ENCODE measurements at regions of chr7 and their contacts with region 1.

Region 1: GRCh38 chr7:128739048-128739962 is at the start of gene CALU:
- DNase-seq: peak; percentile 99
- ATAC-seq: peak; percentile 99
- H3K4me3 ChIP-seq: peak within 1 kb of the TSS; percentile 70 to 94
- H3K27ac ChIP-seq: peak within 1 kb of the TSS; percentile 59 to 91
- H3K4me1 ChIP-seq: peaks cover 0 to 3% of the 10 kb centered on the region in 2 donors
- H3K27me3 ChIP-seq: no peaks in the 10 kb centered on the region
- total RNA-seq, gene CALU: 206 to 267 TPM

Region 2: GRCh38 chr7:128830231-128831177 is 91.2 kb after region 1 on chr7 and contains the start of gene FLNC:
- intact Hi-C with region 1: loop called in 1 of 2 experiments (anchors 5 kb)
- DNase-seq: peak; percentile 76 to 91
- ATAC-seq: peak; percentile 8
- H3K4me3 ChIP-seq: peak within 1 kb of the TSS; percentile 40 to 68
- H3K27ac ChIP-seq: peak within 1 kb of the TSS; percentile 7 to 81
- H3K4me1 ChIP-seq: no peaks in the 10 kb centered on the region
- H3K27me3 ChIP-seq: no peaks in the 10 kb centered on the region
- total RNA-seq, gene FLNC: 135 to 245 TPM

Region 3: DNA sequence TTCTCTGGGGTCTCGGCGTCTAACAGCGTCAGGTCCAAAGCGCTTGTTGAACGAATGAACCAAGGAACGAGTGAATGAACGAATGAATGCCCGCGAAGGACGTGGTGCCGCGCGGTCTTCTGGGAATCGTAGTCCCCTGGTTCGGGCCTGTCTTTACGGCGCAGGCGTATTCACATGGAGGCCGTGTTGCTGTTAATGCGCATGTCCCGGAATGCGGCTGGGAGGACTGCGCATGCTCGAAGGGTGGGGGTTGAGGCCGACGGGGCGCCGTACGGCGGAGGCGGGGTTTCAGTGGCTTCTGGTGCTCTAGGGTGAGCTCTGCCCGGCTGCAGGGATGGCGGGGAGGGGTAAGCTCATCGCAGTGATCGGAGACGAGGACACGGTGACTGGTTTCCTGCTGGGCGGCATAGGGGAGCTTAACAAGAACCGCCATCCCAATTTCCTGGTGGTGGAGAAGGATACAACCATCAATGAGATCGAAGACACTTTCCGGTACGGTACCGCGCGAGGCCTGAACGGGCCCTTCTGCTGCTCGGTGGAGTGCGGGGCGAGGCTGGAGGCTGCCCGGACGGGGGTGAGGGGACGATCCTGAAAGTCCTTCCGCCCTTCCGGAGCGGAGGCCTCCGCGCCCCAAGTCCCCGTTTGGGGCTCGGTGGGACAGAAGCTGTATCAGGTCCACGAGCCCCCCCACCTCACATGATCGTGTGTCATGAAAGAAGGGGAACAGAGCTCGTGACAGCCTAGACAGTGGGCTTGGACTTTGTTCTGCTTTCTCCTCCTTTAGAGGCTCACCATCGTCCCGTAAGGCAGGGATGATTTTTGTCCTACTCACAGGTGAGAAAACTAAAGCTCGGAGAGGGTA is 123.5 kb after region 1 on chr7 and contains the start of gene ATP6V1F:
- intact Hi-C with region 1: loop called in 1 of 2 experiments (anchors 10 kb)
- DNase-seq: peak; percentile 98 to 100
- ATAC-seq: peak; percentile 95
- H3K4me3 ChIP-seq: peak within 1 kb of the TSS; percentile 27 to 71
- H3K27ac ChIP-seq: no peak within 1 kb of the TSS
- H3K4me1 ChIP-seq: no peaks in the 10 kb centered on the region
- H3K27me3 ChIP-seq: no peaks in the 10 kb centered on the region
- total RNA-seq, gene ATP6V1F: 83.7 to 84.8 TPM

Measured in aorta (tissue), 5 donors.